CD8-positive, alpha-beta memory T cell (primary cell): ENCODE measurements at regions of chr12 and their contacts with region 1.

Region 1: GRCh38 chr12:112978163-112979040 is at the start of gene OAS2:
- DNase-seq: peak; percentile 59 to 89 (median 82)
- H3K4me3 ChIP-seq: peak within 1 kb of the TSS; percentile 99
- H3K4me3 Mint-ChIP-seq: peak within 1 kb of the TSS; percentile 99 to 100 (median 100)
- H3K27ac ChIP-seq: peak within 1 kb of the TSS; percentile 84
- H3K27ac Mint-ChIP-seq: peak within 1 kb of the TSS; percentile 96 to 99 (median 98)
- H3K4me1 ChIP-seq: peaks cover 36% of the 10 kb centered on the region
- H3K4me1 Mint-ChIP-seq: peaks cover 44 to 64% (median 52%) of the 10 kb centered on the region in 3 donors
- H3K27me3 ChIP-seq: no peaks in the 10 kb centered on the region
- H3K27me3 Mint-ChIP-seq: no peaks in the 10 kb centered on the region
- total RNA-seq, gene OAS2: 40.1 to 46.6 TPM

Region 2: DNA sequence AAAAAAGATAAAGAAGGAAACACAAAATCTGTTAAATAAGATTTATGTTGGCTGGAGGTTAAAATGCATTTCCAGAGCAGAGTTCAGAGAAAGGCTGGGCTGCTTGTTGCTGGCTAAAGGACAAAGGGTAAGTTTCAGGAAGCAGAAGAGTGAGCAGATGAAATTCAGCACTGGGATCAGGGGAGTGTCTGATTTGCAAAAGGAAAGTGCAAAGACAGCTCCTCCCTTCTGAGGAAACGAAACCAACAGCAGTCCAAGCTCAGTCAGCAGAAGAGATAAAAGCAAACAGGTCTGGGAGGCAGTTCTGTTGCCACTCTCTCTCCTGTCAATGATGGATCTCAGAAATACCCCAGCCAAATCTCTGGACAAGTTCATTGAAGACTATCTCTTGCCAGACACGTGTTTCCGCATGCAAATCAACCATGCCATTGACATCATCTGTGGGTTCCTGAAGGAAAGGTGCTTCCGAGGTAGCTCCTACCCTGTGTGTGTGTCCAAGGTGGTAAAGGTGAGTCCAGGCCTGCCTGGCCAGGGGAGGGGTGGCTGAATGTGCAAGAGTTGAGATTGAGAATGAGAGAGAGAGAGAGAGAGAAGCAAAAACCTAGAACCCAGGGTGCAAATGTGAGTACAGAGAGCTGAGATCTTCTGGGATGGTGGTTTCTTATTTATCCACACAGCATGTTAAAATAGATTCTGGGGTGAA is 71.5 kb before region 1 on chr12 and contains the start of gene OAS1:
- CTCF ChIA-PET with region 1: interaction called, 8 read pairs
- POLR2A ChIA-PET with region 1: interaction called, 21 read pairs
- DNase-seq: peak in 2 of 5 donors; percentile 26 to 30
- H3K4me3 ChIP-seq: peak within 1 kb of the TSS; percentile 91
- H3K4me3 Mint-ChIP-seq: peak within 1 kb of the TSS; percentile 93 to 98 (median 95)
- H3K27ac ChIP-seq: peak within 1 kb of the TSS; percentile 57
- H3K27ac Mint-ChIP-seq: peak within 1 kb of the TSS; percentile 68 to 99 (median 94)
- H3K4me1 ChIP-seq: peaks cover 60% of the 10 kb centered on the region
- H3K4me1 Mint-ChIP-seq: peaks cover 60 to 86% (median 67%) of the 10 kb centered on the region in 3 donors
- H3K27me3 ChIP-seq: no peaks in the 10 kb centered on the region
- H3K27me3 Mint-ChIP-seq: no peaks in the 10 kb centered on the region
- total RNA-seq, gene OAS1: 4.5 to 5.5 TPM

Region 3: DNA sequence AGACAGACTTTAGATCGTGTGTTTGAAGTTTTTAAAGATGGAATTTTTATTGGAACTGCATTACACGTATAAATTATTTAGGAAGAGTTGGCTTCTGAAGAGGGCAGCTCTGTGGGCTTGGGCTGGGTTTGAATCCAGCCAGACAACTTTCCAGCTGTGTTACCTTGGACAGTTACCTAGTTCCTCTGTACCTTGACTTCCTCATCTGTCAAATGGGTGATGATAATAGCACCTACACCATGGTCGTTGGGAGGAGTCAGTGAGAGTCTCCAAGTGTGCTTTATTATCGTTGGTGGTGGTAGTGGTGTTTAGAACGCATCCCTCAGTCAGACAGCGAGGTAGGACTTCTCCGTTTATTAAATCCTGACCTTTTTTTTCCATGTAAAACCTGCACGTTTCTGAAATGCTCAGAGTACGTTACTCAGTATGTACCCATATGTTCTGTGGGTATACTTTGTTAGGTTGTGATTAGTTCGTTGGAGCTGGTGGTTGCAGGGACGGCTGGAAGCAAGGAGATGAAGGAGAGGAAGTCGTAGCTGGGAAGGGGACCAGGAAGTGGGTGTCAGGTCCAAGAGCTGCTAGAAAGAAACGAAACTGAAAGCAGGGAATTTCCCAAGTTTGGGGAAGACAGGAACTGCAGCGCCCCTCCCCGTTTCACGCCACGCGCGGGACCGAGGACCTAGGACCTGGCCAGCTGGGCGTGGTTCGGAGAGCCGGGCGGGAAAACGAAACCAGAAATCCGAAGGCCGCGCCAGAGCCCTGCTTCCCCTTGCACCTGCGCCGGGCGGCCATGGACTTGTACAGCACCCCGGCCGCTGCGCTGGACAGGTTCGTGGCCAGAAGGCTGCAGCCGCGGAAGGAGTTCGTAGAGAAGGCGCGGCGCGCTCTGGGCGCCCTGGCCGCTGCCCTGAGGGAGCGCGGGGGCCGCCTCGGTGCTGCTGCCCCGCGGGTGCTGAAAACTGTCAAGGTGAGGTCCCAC is 40.4 kb before region 1 on chr12 and contains the start of gene OAS3:
- CTCF ChIA-PET with region 1: interaction called, 10 read pairs
- POLR2A ChIA-PET with region 1: interaction called, 24 read pairs
- DNase-seq: peak; percentile 51 to 82 (median 72)
- H3K4me3 ChIP-seq: peak within 1 kb of the TSS; percentile 83
- H3K4me3 Mint-ChIP-seq: peak within 1 kb of the TSS; percentile 86 to 95 (median 91)
- H3K27ac ChIP-seq: peak within 1 kb of the TSS; percentile 62
- H3K27ac Mint-ChIP-seq: peak within 1 kb of the TSS; percentile 83 to 97 (median 92)
- H3K4me1 ChIP-seq: peaks cover 18% of the 10 kb centered on the region
- H3K4me1 Mint-ChIP-seq: peaks cover 29 to 43% (median 30%) of the 10 kb centered on the region in 3 donors
- H3K27me3 ChIP-seq: no peaks in the 10 kb centered on the region
- H3K27me3 Mint-ChIP-seq: no peaks in the 10 kb centered on the region
- total RNA-seq, gene OAS3: 11.2 to 12.5 TPM